ENCODE measurements at regions of chr7 and their contacts with region 1.

Region 1: GRCh38 chr7:121414436-121414835 is 18.3 kb upstream of the FAM3C start:
- DNase-seq: no peak
- H3K4me3 ChIP-seq: no peak overlapping the region
- H3K27ac ChIP-seq: no peak overlapping the region
- H3K4me1 ChIP-seq: no peaks in the 10 kb centered on the region
- CTCF ChIP-seq: no peak

Region 2: DNA sequence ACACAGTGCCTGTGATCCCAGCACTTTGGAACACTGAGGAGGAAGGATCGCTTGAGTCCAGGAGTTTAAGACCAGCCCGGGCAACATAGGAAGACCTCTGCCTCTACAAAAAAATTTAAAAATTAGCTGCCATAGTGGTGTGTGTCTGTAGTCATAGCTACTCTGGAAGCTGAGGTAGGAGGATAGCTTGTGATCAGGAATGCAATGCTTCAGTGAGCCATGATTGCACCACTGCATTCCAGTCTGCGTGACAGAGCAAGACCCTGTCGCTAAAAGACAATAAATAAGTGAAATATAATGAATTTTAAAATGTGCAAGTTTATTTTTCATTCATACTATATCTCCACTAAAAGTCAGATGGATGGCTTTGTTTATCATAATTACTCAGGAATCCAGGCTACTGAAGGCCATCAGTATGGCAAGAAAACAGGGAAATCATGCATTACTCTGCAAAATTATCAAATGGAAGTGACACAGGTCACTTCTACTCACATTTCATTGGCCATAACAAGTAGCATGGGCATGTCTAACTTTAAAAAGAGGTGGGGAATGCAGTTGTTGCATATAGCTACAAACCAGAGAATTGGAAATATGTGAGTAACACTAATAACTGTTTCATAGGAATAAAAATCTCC is 14.5 kb after region 1 on chr7:
- CTCF ChIA-PET with region 1: no interaction called
- POLR2A ChIA-PET with region 1: no interaction called
- intact Hi-C with region 1: loop called (anchors 2 kb)
- DNase-seq: no peak
- H3K4me3 ChIP-seq: no peak overlapping the region
- H3K27ac ChIP-seq: no peak overlapping the region
- H3K4me1 ChIP-seq: no peaks in the 10 kb centered on the region
- CTCF ChIP-seq: no peak

Measured in OCI-LY7 (cell line).